Mammary epithelial cell (primary cell): ENCODE measurements at regions of chr5 and their contacts with region 1.

Region 1: GRCh38 chr5:87260604-87261192 is 7.0 kb upstream of the RASA1 start:
- DNase-seq: no peak
- H3K4me3 ChIP-seq: no peak overlapping the region
- H3K27ac ChIP-seq: no peak overlapping the region
- H3K4me1 ChIP-seq: no peaks in the 10 kb centered on the region
- H3K27me3 ChIP-seq: no peaks in the 10 kb centered on the region
- CTCF ChIP-seq: no peak

Region 2: GRCh38 chr5:87081511-87082372 is 179.0 kb before region 1 on chr5:
- CTCF ChIA-PET with region 1: no interaction called
- dilution Hi-C with region 1: loop called (anchors 5 kb)
- in situ Hi-C with region 1: no loop called
- intact Hi-C with region 1: no loop called
- DNase-seq: no peak
- H3K4me3 ChIP-seq: no peak overlapping the region
- H3K27ac ChIP-seq: no peak overlapping the region
- H3K4me1 ChIP-seq: peaks cover 8% of the 10 kb centered on the region
- H3K27me3 ChIP-seq: no peaks in the 10 kb centered on the region
- CTCF ChIP-seq: no peak